ENCODE measurements at regions of chr2 and their contacts with region 1.

Region 1: DNA sequence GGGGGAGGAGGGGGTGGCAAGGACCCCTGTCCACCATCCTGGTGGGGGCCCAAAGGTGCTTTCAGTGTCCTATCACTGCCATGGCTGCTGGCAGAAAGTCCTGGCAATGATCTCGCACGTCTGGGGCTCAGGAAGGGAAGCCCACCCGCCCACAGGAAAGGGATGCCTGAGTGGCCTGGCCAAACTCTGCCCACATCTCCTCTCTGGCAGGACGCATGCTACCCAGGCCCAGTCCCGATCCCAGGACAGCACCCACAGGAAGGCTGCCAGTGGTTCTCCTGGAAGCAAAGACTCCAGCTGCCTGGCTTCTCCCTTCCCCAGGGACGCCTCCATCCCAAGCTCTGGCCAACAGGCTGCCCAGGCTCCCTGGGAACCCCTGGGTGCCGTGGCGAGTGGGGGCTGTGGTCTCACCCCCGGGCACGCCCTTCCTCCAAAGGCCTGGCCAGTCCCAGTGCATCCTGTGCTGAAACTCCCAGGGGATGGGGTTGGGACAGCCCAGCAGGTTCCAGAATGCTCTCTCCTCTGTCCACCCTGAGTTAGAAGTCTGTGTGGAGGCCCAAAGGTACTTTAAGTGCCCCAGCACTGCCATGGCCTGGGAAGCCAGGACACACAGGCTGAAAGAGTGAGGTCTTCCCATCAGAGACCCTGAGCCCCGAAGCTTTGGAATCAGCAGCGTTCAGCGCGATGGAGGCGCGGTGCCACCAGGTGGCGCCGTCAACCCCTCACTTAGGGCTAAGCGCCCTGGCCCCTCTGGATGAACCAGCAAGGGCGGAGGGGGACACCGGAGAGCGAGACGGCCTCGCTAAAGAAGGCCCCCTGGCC is 29.8 kb upstream of the TAF1B start:
- DNase-seq: peak; percentile 47 to 88 (median 75)

Region 2: GRCh38 chr2:9663008-9663879 is 150.3 kb before region 1 on chr2:
- intact Hi-C with region 1: no loop called
- DNase-seq: no peak

Region 3: DNA sequence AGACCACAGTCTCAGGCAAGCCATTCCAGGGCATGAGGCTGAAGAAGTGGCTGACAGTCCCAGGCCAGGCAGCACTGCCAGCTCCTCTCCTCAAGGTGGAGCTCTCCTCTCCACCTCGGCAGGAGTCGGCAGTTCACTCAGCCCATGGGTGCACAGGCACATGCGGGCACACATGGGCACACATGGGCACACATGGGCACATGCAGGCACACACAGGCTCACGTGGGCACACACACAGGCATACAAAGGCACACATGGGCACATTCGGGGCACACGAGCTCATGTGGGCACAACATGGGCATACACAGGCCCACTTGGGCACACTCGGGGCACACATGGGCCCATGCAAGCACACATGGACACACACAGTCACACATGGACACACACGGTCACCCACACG is 35.5 kb before region 1 on chr2:
- intact Hi-C with region 1: no loop called
- DNase-seq: no peak

Region 4: DNA sequence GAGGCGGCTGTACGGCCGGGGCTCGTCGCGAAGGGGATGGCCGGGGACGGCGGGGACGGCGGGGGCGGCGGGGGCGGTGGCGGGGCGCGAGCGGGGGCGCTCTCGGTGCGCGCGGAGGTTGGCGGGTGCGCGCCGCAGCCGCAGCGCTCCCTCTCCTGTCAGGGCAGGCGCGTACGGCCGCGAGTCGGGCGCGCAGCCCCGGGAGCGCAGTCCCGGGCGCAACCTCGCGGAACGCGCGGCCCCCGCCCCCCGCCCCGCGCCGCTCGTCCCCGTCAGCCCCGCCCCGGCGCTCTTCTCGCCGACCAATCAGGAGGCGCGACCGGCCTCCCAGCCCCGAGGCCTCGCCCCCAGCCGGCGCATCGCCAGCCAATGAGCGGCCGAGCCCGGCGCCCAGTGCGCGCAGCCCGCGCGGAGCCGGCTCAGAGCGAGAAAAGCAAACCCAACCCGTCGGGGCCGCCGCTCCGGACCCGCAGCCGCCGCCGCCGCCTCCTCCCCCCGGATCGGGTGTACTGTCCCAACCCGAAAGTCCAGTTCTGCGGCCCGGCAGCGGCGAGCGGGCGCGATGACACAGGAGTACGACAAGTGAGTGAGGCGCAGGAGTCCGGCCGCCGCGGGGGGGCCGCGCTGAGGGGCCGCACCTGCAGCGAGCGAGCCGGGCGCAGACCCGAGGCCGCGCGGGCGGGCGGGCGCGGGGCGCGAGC is 137.9 kb after region 1 on chr2 and contains the start of gene GRHL1:
- intact Hi-C with region 1: loop called (anchors 10 kb)
- DNase-seq: peak; percentile 74 to 98 (median 94)

Region 5: DNA sequence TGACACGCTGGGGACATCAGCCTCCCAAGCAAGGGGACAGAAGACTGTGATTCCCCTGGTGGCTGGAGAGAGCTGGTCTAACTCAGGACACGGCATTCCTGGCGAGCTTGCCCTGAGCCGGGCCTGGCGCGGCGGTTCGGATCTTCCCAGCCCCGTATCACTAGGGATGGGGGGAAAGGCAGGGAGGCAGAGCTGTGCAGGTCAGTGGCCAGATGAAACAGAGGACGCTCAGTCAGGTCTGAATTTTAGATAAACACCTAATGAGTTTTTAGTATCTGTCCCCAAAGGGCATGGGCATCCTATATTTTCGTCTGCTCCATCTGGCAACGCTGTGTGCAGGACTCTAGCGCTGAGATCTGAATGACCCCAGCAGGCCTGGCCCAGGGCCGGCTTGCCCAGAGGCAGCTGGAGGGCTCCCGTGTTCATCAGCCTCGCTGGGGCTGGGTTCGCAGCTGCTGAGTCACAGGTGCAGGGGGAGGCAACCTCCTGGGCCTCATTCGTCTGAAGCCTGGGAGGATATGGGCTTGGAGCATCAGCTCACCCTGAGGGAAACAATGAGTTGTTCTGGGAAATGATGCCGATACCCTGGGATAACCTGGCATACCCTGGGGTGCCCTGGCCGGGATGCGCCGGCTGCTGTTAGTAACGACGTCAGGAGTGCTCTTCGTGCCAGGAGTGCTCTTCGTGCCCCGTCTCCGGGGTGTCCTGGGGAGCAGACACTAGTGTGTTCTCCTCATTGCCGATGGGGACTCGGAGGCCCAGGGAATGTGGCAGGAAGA is 441.0 kb after region 1 on chr2:
- intact Hi-C with region 1: no loop called
- DNase-seq: no peak